Activated T-helper 1 cell treated with anti-CD3 and anti-CD28 coated beads, Interleukin-12 subunit alpha, Interleukin-12 subunit beta, Interleukin-2, Interleukin-4 antibody, amounts not matched to agents 30 ng/mL and 10 ng/mL and 1 ng/mL, durations not matched to agents 14 hours and 24 hours and 36 hours (primary cell): ENCODE measurements at regions of chr22 and their contacts with region 1.

Region 1: GRCh38 chr22:30305519-30305905 is 16.2 kb upstream of the CASTOR1 start:
- DNase-seq: peak; percentile 68
- H3K4me3 Mint-ChIP-seq: peak overlapping the region; percentile 77
- H3K27ac Mint-ChIP-seq: peak overlapping the region; percentile 95
- H3K4me1 Mint-ChIP-seq: peaks cover 93% of the 10 kb centered on the region
- H3K27me3 Mint-ChIP-seq: no peaks in the 10 kb centered on the region

Region 2: GRCh38 chr22:30326706-30327362 is 21.3 kb after region 1 on chr22 and contains the start of gene TBC1D10A:
- intact Hi-C with region 1: loop called (anchors 1 kb)
- DNase-seq: peak; percentile 90
- H3K4me3 Mint-ChIP-seq: peak within 1 kb of the TSS; percentile 89
- H3K27ac Mint-ChIP-seq: peak within 1 kb of the TSS; percentile 60
- H3K4me1 Mint-ChIP-seq: peaks cover 48% of the 10 kb centered on the region
- H3K27me3 Mint-ChIP-seq: no peaks in the 10 kb centered on the region
- total RNA-seq, gene TBC1D10A: 17.3 and 24.9 TPM in 2 replicates